ENCODE measurements at regions of chr3 and their contacts with region 1.

Region 1: GRCh38 chr3:113019182-113020137 is 28.7 kb downstream of the GTPBP8 start:
- DNase-seq: peak; percentile 67
- ATAC-seq: peak; percentile 94
- H3K4me3 ChIP-seq: peak overlapping the region; percentile 93
- H3K27ac ChIP-seq: peak overlapping the region; percentile 86
- H3K4me1 ChIP-seq: peaks cover 4% of the 10 kb centered on the region; the same call in 1 of the 2 replicates
- H3K27me3 ChIP-seq: no peaks in the 10 kb centered on the region
- CTCF ChIP-seq: no peak
- EP300 ChIP-seq: peak in 1 of 2 experiments; percentile 11; a peak in 1 of 4 replicates
- POLR2A ChIP-seq: peak; percentile 93
- RAD21 ChIP-seq: no peak

Region 2: GRCh38 chr3:112751564-112752512 is 267.6 kb before region 1 on chr3:
- CTCF ChIA-PET with region 1: no interaction called
- POLR2A ChIA-PET with region 1: no interaction called
- RAD21 ChIA-PET with region 1: no interaction called
- SMC1A ChIA-PET with region 1: no interaction called
- in situ Hi-C with region 1: no loop called
- intact Hi-C with region 1: no loop called
- DNase-seq: no peak
- ATAC-seq: no peak
- H3K4me3 ChIP-seq: no peak overlapping the region
- H3K27ac ChIP-seq: no peak overlapping the region
- H3K4me1 ChIP-seq: no peaks in the 10 kb centered on the region
- H3K27me3 ChIP-seq: no peaks in the 10 kb centered on the region; a peak in 1 of 4 replicates
- CTCF ChIP-seq: no peak
- EP300 ChIP-seq: no peak
- POLR2A ChIP-seq: no peak
- RAD21 ChIP-seq: no peak

Region 3: DNA sequence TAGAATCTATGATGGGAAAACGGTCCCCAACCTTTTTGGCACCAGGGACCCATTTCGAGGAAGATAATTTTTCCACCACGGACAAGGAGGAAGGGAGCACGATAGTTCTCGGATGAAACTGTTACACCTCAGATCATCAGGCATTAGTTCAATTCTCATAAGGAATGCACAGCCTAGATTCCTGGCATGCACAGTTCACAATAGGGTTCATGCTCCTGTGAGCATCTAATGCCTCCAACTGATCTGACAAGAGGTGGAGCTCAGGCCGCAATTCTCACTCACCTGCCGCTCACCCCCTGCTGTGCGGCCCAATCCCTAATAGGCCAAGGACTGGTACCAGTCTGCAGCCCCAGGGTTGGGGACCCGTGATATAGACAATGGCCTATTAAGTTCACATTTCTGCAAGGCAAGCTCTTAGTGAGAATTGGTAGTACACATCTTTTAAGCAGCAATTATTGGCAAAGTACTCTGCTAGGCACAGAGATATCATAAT is 71.1 kb before region 1 on chr3:
- CTCF ChIA-PET with region 1: no interaction called
- POLR2A ChIA-PET with region 1: no interaction called
- RAD21 ChIA-PET with region 1: no interaction called
- SMC1A ChIA-PET with region 1: no interaction called
- in situ Hi-C with region 1: no loop called
- intact Hi-C with region 1: no loop called
- DNase-seq: no peak
- ATAC-seq: no peak
- H3K4me3 ChIP-seq: no peak overlapping the region
- H3K27ac ChIP-seq: no peak overlapping the region
- H3K4me1 ChIP-seq: no peaks in the 10 kb centered on the region
- H3K27me3 ChIP-seq: no peaks in the 10 kb centered on the region
- CTCF ChIP-seq: no peak
- EP300 ChIP-seq: no peak
- POLR2A ChIP-seq: no peak
- RAD21 ChIP-seq: no peak

Region 4: DNA sequence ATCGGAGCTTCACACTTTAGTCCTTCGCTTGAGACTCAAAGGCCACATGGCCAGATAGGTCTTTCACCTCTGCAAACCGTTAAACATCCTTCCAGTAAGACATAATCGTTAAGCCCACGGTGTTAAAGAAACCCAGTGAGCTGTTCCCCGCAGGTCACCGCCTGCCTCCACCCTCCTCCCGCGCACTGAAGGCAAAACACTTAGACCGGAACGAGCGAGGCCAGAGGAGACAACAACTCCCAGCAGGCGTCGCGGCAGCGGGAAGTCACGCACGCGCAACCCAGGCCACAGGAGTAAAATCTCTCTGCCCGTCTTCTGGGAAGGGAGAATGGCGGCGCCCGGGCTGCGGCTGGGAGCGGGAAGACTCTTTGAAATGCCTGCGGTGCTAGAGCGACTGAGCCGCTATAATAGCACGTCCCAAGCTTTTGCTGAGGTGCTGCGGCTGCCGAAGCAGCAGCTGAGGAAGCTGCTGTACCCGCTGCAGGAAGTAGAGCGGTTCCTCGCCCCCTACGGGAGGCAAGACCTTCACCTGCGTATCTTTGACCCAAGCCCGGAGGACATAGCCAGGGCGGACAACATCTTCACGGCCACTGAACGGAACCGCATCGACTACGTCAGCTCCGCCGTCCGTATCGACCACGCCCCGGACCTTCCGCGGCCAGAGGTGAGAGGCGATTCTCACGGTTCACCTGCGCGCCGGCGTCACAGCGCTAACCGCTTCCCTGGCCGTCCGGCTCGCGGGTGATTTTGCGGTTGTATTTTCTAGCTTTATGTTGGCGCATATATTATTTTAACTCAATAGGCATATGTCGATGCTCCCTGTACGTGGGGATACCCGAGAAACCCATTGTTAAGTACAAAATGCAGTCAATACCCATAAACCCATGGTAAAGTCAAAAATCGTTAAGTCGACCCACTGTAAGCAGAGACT is 28.5 kb before region 1 on chr3 and contains the start of gene GTPBP8:
- CTCF ChIA-PET with region 1: interaction called, 4 read pairs
- POLR2A ChIA-PET with region 1: interaction called, 21 read pairs
- RAD21 ChIA-PET with region 1: interaction called, 24 read pairs
- SMC1A ChIA-PET with region 1: interaction called, 25 read pairs
- in situ Hi-C with region 1: no loop called
- intact Hi-C with region 1: loop called (anchors 2 kb)
- DNase-seq: peak; percentile 69
- ATAC-seq: peak; percentile 94
- H3K4me3 ChIP-seq: peak within 1 kb of the TSS; percentile 69
- H3K27ac ChIP-seq: peak within 1 kb of the TSS; percentile 90
- H3K4me1 ChIP-seq: peaks cover 6% of the 10 kb centered on the region
- H3K27me3 ChIP-seq: no peaks in the 10 kb centered on the region
- CTCF ChIP-seq: no peak
- EP300 ChIP-seq: peak; percentile 65 to 82; a peak in 3 of 4 replicates
- POLR2A ChIP-seq: peak; percentile 88
- RAD21 ChIP-seq: no peak
- polyA plus RNA-seq, gene GTPBP8: 18.8 to 29.0 TPM

Region 5: DNA sequence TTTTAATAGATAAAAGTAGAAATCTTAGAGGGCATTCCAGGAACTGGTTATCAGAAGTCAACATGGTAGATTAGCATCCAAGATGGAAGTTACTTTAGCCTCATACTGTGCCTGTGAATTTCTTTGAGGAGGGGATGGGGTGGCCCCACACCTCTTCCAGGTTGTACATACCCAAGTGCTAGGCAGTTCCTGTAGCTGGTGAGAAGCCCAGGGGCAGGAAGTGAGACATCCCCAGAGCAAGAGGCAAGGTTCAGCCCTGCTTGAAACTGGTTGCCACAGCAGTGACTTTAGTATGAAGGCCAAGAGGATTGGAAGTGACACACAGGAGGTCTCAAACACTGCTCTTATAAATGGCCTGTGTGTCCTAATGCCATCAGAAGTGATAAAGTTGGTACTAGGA is 16.8 kb before region 1 on chr3:
- CTCF ChIA-PET with region 1: interaction called, 6 read pairs
- POLR2A ChIA-PET with region 1: interaction called, 7 read pairs
- RAD21 ChIA-PET with region 1: interaction called, 5 read pairs
- SMC1A ChIA-PET with region 1: interaction called, 23 read pairs
- in situ Hi-C with region 1: no loop called
- intact Hi-C with region 1: no loop called
- DNase-seq: no peak
- ATAC-seq: peak; percentile 68
- H3K4me3 ChIP-seq: no peak overlapping the region
- H3K27ac ChIP-seq: no peak overlapping the region
- H3K4me1 ChIP-seq: 0 out of 2 replicates have a peak, but pooled peaks cover 3% of the 10 kb centered on the region
- H3K27me3 ChIP-seq: no peaks in the 10 kb centered on the region
- CTCF ChIP-seq: no peak
- EP300 ChIP-seq: no peak
- POLR2A ChIP-seq: no peak
- RAD21 ChIP-seq: no peak

Region 6: GRCh38 chr3:113008117-113008516 is 11.3 kb before region 1 on chr3:
- CTCF ChIA-PET with region 1: interaction called, 5 read pairs
- POLR2A ChIA-PET with region 1: interaction called, 7 read pairs
- RAD21 ChIA-PET with region 1: interaction called, 3 read pairs
- SMC1A ChIA-PET with region 1: interaction called, 23 read pairs
- in situ Hi-C with region 1: no loop called
- intact Hi-C with region 1: no loop called
- DNase-seq: no peak
- ATAC-seq: no peak
- H3K4me3 ChIP-seq: no peak overlapping the region
- H3K27ac ChIP-seq: no peak overlapping the region
- H3K4me1 ChIP-seq: no peaks in the 10 kb centered on the region
- H3K27me3 ChIP-seq: no peaks in the 10 kb centered on the region
- CTCF ChIP-seq: no peak
- EP300 ChIP-seq: no peak
- POLR2A ChIP-seq: no peak
- RAD21 ChIP-seq: no peak

Region 7: GRCh38 chr3:113035387-113035982 is 16.0 kb after region 1 on chr3:
- CTCF ChIA-PET with region 1: interaction called, 19 read pairs
- POLR2A ChIA-PET with region 1: no interaction called
- RAD21 ChIA-PET with region 1: no interaction called
- SMC1A ChIA-PET with region 1: interaction called, 4 read pairs
- in situ Hi-C with region 1: no loop called
- intact Hi-C with region 1: no loop called
- DNase-seq: no peak
- ATAC-seq: peak; percentile 95
- H3K4me3 ChIP-seq: no peak overlapping the region
- H3K27ac ChIP-seq: no peak overlapping the region
- H3K4me1 ChIP-seq: no peaks in the 10 kb centered on the region
- H3K27me3 ChIP-seq: no peaks in the 10 kb centered on the region
- CTCF ChIP-seq: peak; percentile 72 to 92 (median 85)
- EP300 ChIP-seq: no peak
- POLR2A ChIP-seq: no peak
- RAD21 ChIP-seq: peak; percentile 61

Region 8: GRCh38 chr3:114034787-114035545 is 1015.5 kb after region 1 on chr3:
- CTCF ChIA-PET with region 1: no interaction called
- POLR2A ChIA-PET with region 1: interaction called, 10 read pairs
- RAD21 ChIA-PET with region 1: no interaction called
- SMC1A ChIA-PET with region 1: no interaction called
- in situ Hi-C with region 1: no loop called
- intact Hi-C with region 1: no loop called
- DNase-seq: no peak
- ATAC-seq: no peak
- H3K4me3 ChIP-seq: no peak overlapping the region
- H3K27ac ChIP-seq: no peak overlapping the region
- H3K4me1 ChIP-seq: no peaks in the 10 kb centered on the region
- H3K27me3 ChIP-seq: no peaks in the 10 kb centered on the region
- CTCF ChIP-seq: no peak
- EP300 ChIP-seq: no peak
- POLR2A ChIP-seq: no peak
- RAD21 ChIP-seq: no peak